PC-9 (cell line): ENCODE measurements at regions of chr22 and their contacts with region 1.

Region 1: DNA sequence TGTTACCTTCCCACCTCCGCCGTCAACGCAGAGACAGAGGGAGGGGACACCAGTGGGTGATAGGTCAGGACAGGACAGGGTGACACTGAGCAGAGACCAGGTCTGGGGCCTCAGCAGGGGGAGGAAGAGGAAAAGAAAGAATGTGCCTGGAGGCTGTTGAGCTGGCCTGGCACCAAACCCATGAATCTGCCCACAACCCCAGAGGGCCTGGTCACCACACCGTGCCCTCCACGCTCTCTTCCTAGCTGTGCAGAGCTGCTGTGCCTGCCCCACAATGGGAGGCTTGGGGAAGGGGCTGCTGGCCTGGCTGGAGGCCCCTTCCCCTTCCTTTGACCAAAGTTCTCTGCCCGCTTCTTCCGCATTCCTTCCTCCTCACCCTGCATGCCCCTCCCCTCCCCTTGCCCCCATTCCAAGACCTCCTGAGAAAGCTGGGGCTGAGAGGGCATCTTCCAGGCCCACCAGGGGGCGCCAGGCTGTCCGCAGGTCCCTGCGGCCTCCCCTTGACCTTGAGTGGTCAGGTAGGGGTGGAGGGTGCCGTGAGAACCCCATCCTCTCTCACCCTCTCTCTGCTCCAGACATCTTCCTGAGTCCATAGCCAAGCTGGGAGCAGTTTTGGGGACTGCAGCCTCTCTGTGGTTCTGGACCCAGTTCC is 11.0 kb upstream of the CACNA1I start:
- DNase-seq: peak; percentile 81
- H3K4me3 ChIP-seq: peak overlapping the region; percentile 19; the same call in 1 of the 2 replicates
- H3K27ac ChIP-seq: peak overlapping the region; percentile 30
- H3K4me1 ChIP-seq: peaks cover 22% of the 10 kb centered on the region
- H3K27me3 ChIP-seq: 0 out of 2 replicates have a peak, but pooled peaks cover 10% of the 10 kb centered on the region
- CTCF ChIP-seq: peak; percentile 96

Region 2: DNA sequence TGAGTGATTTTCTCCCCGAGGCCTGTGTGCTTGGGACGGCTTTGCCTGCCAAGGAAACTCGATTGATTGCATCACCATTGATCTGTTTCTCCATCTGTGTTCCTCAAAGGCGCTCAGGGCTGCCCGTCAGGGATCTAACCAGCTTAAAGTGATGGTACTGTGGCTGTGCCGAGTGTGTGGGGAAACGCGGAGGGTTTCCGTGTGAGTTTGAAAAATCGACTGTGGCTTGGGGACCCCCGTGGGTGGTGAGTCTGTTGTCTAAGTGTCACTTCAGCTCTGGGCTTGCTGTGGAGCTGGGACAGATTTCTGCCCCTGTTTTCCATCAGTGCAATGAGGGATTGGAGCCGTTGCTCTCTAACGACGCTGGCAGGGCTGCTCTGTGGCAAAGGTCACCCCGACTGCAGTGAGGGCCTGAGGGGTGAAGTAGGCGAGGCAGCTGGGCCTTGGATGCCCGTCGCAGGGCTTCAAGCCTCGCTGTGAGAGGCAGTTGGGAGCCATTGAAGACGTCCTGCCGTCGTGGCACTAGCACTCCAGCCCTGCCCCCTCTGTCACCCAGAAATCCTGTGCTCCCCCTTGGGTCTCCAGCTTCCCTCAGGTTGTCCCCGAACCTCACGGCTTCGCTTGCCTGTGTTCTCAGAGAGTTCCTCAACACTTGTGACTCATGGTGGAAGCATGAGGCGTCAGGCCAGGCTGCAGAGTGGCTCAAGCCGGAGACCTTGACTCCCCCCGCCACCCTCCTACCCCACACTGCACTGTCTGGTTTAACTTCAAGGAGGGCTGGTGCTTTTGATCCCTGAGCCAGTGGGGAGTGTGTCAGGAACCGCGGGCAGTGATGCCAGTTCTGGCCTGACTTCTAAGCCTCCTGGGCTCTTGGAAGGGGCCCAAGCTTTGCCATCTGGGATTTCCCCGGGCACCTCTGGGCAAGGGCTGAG is 32.8 kb after region 1 on chr22:
- CTCF ChIA-PET with region 1: no interaction called
- POLR2A ChIA-PET with region 1: interaction called, 18 read pairs
- intact Hi-C with region 1: no loop called
- DNase-seq: peak; percentile 89 to 94
- H3K4me3 ChIP-seq: peak overlapping the region; percentile 24; the same call in 1 of the 2 replicates
- H3K27ac ChIP-seq: peak overlapping the region; percentile 60
- H3K4me1 ChIP-seq: peaks cover 23% of the 10 kb centered on the region
- H3K27me3 ChIP-seq: no peaks in the 10 kb centered on the region
- CTCF ChIP-seq: no peak

Region 3: GRCh38 chr22:39634671-39635405 is 75.3 kb after region 1 on chr22:
- CTCF ChIA-PET with region 1: interaction called, 5 read pairs
- POLR2A ChIA-PET with region 1: no interaction called
- intact Hi-C with region 1: loop called (anchors 5 kb)
- DNase-seq: peak; percentile 95 to 99
- H3K4me3 ChIP-seq: peak overlapping the region; percentile 39; the same call in 1 of the 2 replicates
- H3K27ac ChIP-seq: peak overlapping the region; percentile 55
- H3K4me1 ChIP-seq: peaks cover 54% of the 10 kb centered on the region
- H3K27me3 ChIP-seq: no peaks in the 10 kb centered on the region
- CTCF ChIP-seq: no peak

Region 4: DNA sequence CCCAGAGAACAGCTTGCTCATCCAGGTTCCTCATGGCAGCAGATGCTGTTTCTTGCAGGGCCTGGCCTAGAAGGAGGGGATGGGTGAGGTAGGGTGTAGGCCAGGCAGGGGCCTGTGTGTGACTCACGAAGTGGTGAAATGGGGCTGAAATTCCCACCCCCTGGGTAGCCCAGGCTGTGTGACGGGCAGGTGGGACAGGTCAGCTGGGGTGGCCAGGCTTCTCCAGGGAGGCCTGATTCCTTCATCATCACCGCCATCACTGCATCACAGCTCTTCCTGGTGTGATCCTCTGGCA is 94.2 kb after region 1 on chr22:
- CTCF ChIA-PET with region 1: interaction called, 11 read pairs
- POLR2A ChIA-PET with region 1: no interaction called
- intact Hi-C with region 1: no loop called
- DNase-seq: peak; percentile 25 to 66
- H3K4me3 ChIP-seq: no peak overlapping the region
- H3K27ac ChIP-seq: no peak overlapping the region
- H3K4me1 ChIP-seq: peaks cover 16% of the 10 kb centered on the region
- H3K27me3 ChIP-seq: no peaks in the 10 kb centered on the region
- CTCF ChIP-seq: no peak

Region 5: DNA sequence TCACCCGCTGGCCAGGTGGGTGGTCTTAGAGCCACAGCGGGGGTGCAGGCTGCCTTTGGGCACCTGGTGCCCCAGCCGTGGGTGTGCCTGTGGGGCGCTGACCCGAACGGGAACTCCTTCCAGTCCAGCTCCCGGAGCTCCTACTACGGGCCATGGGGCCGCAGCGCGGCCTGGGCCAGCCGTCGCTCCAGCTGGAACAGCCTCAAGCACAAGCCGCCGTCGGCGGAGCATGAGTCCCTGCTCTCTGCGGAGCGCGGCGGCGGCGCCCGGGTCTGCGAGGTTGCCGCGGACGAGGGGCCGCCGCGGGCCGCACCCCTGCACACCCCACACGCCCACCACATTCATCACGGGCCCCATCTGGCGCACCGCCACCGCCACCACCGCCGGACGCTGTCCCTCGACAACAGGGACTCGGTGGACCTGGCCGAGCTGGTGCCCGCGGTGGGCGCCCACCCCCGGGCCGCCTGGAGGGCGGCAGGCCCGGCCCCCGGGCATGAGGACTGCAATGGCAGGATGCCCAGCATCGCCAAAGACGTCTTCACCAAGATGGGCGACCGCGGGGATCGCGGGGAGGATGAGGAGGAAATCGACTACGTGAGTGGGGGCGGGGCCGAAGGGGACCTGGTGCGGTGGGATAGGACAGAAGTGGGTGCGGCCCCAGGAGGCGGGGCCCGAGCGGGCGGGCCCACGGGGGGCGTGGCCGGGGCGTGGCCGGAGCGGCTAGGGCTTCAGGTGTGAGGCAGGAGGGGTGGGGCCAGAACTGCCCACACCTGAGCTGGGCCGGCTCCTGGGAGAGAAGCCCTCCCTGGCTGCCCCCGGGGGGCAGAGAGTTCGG is 102.5 kb after region 1 on chr22:
- CTCF ChIA-PET with region 1: no interaction called
- POLR2A ChIA-PET with region 1: interaction called, 12 read pairs
- intact Hi-C with region 1: no loop called
- DNase-seq: peak in 1 of 2 experiments; percentile 60
- H3K4me3 ChIP-seq: no peak overlapping the region
- H3K27ac ChIP-seq: no peak overlapping the region
- H3K4me1 ChIP-seq: peaks cover 35% of the 10 kb centered on the region
- H3K27me3 ChIP-seq: no peaks in the 10 kb centered on the region
- CTCF ChIP-seq: no peak

Region 6: GRCh38 chr22:39932918-39933649 is 373.5 kb after region 1 on chr22:
- CTCF ChIA-PET with region 1: no interaction called
- POLR2A ChIA-PET with region 1: no interaction called
- intact Hi-C with region 1: loop called (anchors 5 kb)
- DNase-seq: peak in 1 of 2 experiments; percentile 29
- H3K4me3 ChIP-seq: no peak overlapping the region
- H3K27ac ChIP-seq: no peak overlapping the region
- H3K4me1 ChIP-seq: no peaks in the 10 kb centered on the region
- H3K27me3 ChIP-seq: peaks cover 94% of the 10 kb centered on the region
- CTCF ChIP-seq: peak; percentile 87

Region 7: GRCh38 chr22:40024201-40025061 is 464.9 kb after region 1 on chr22:
- CTCF ChIA-PET with region 1: interaction called, 5 read pairs
- POLR2A ChIA-PET with region 1: interaction called, 5 read pairs
- intact Hi-C with region 1: loop called (anchors 1 kb)
- DNase-seq: peak; percentile 65 to 75
- H3K4me3 ChIP-seq: no peak overlapping the region
- H3K27ac ChIP-seq: no peak overlapping the region
- H3K4me1 ChIP-seq: no peaks in the 10 kb centered on the region
- H3K27me3 ChIP-seq: no peaks in the 10 kb centered on the region
- CTCF ChIP-seq: peak; percentile 97